ENCODE measurements at regions of chr15 and their contacts with region 1.

Region 1: GRCh38 chr15:60299452-60300047 is 98.2 kb downstream of the ANXA2 start:
- ATAC-seq: peak; percentile 93 to 99 (median 98)
- H3K4me3 ChIP-seq: no peak overlapping the region
- H3K27ac ChIP-seq: peak overlapping the region; percentile 23 to 38
- H3K4me1 ChIP-seq: peaks cover 10% of the 10 kb centered on the region in 2 donors

Region 2: DNA sequence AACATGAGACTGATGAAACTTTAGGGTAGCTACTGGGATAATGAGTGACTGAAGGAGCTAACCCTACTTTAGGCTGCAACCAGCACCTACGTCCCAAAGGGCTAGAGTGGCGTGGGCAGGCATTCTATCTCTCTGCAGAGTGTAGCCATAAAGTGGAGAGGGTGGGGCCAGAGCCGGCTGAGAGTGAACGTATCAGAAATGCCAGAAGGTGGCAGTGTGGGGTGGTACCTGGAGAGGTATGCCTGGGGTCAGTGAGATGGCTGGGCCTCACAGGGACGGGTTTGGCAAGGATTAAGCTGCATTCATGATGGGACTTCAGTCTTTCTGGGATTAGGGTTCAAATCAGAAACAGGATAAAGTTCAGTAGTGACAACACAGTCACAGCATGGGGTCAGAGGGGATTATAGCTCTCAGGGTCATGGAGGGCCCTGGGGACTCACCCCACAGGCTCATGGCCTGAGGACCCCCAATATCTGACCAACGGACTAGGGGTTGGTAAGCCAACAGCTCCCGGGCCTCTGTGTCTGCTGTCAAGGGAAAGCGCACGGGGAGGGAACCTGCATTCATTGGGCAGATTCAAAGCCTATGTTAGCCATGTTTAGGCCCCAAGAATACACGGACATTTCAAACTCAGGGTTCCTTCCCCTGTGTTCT is 381.9 kb before region 1 on chr15:
- in situ Hi-C with region 1: loop called in 1 of 9 experiments (anchors 25 kb)
- ATAC-seq: peak; percentile 78 to 100 (median 88)
- H3K4me3 ChIP-seq: no peak overlapping the region
- H3K27ac ChIP-seq: no peak overlapping the region
- H3K4me1 ChIP-seq: peaks cover 8 to 9% of the 10 kb centered on the region in 2 donors

Region 3: GRCh38 chr15:61051569-61052031 is 752.0 kb after region 1 on chr15:
- in situ Hi-C with region 1: no loop called
- ATAC-seq: peak; percentile 85 to 100 (median 94)
- H3K4me3 ChIP-seq: no peak overlapping the region
- H3K27ac ChIP-seq: no peak overlapping the region
- H3K4me1 ChIP-seq: peaks cover 5 to 21% of the 10 kb centered on the region in 2 donors